KBM-7 (cell line): ENCODE measurements at regions of chr15 and their contacts with region 1.

Region 1: DNA sequence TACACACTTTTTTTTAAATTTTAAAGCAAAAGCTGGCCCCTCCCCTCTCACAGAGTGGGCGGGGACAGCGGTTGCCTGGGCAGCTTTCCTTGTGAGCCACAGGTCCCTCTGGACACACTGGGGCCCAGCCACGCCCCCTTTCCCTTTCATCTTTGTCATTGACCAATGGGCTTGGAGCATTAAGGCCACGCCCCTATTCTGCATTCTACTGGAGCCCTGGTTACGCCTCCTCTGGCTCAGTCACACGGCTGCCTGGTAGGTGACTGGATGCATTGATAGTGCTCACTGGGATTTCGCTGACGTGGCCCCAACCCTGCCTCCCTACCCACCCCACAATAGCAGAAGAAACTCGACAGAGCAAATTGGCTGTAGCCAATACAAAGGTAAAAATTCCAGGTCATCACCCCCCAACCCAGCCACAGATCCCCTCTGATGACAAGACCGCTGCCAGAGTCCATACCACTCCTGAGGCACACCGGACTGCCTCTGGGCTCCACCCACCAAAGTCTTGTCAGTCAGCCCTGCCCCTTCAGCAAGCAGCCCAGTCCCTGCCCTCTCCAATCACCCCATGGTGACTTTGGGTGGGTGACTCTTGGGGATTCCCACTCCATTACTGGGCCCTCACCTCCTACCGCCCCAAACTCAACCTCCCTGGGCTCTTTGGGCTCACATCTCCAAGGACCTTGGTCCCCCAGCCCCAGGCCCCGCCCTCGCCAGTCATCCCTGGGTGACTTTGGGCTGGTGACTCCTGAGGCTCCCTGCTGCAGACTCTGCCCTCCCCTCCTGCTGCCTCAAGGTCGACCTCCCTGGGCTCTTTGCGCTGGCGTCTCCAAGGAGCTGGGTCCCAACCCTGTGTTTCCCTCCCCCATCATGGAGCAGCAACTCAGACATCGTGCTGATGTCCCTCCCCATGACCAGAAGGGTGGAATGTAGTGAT is 112.2 kb upstream of the FAN1 start:
- DNase-seq: no peak

Region 2: DNA sequence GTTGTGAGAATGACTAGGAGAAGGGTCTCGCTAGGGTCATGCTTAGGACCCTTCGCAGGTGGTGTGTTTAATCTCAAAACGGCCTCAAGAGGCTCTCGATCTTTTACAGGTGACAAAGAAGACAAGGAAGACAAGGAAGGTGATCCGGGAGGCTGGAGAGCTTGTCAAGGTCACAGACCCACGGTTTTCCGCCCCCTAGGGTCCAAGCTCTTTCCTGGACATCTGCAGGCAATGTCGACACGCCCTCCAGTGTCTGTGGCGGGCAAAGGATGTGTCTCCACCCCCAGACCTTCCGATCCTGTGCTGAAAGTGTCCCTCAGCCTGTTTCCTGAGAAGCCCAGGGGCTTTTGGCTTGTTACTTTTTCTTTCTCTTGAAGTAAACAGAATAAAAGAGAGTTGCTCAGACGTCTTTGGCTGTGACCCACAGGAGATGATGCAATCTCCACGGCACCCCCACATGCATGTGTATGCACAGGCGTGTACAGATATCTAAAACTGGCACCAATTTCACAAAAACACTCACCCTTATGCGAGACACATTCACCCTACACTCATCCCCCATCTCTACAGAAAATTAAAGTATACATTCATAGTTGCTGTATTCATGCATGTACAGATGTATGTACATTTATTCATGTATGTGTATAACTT is 643.9 kb after region 1 on chr15:
- in situ Hi-C with region 1: loop called (anchors 25 kb)
- DNase-seq: peak; percentile 92